ENCODE measurements at regions of chr12 and their contacts with region 1.

Region 1: GRCh38 chr12:12786716-12787601 is 1.5 kb downstream of the APOLD1 start:
- DNase-seq: peak; percentile 73 to 78 (median 76)
- H3K4me3 ChIP-seq: peak overlapping the region; percentile 75 to 81
- H3K4me3 Mint-ChIP-seq: peak overlapping the region; percentile 80 to 92 (median 88)
- H3K27ac ChIP-seq: peak overlapping the region; percentile 65
- H3K27ac Mint-ChIP-seq: peak overlapping the region; percentile 48 to 90 (median 85)
- H3K4me1 ChIP-seq: peaks cover 27% of the 10 kb centered on the region
- H3K4me1 Mint-ChIP-seq: peaks cover 4 to 30% (median 10%) of the 10 kb centered on the region in 4 donors
- H3K27me3 ChIP-seq: no peaks in the 10 kb centered on the region
- H3K27me3 Mint-ChIP-seq: no peaks in the 10 kb centered on the region

Region 2: DNA sequence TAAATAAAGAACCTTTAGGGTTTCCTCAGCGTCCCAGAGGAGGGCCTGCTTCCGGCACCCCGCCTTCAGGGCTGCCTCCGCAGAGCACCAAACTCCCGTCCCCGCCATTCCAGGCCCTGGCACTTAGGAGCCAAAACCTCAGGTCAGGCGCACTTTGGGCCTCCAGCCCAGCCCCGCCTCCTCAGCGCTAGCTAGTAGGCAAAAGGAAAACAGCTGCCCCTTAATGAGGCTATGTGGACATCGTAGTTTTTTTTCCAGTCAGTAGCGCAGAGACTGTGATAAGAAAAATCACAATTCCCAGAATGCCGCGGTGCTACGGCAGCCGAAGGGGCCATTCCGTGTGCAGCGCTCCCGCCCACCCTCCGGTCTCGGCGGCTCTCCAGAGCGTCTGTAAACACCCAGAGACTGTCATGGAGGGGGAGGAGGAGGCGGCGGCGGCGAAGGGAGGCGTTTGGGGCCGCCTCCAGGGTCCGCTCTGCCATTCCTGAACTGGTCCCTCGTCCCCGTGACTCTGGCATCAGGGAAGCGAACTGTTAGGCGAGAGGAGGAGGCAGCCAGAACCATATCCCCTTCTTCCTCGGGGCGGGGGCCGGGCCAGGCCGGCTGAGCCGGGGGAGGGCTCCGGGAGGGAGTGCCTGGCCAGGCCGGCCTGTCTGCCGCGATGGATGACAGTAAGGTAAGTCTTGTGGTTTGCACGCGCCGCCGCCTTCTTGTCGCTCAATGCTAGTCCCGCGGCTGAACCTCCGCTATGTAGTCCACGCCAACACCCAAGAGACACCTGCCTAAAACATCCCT is 175.2 kb before region 1 on chr12 and contains the start of gene CREBL2:
- CTCF ChIA-PET with region 1: no interaction called
- POLR2A ChIA-PET with region 1: no interaction called
- intact Hi-C with region 1: no loop called
- DNase-seq: peak; percentile 88 to 89 (median 88)
- H3K4me3 ChIP-seq: peak within 1 kb of the TSS; percentile 92 to 97
- H3K4me3 Mint-ChIP-seq: peak within 1 kb of the TSS; percentile 92 to 99 (median 95)
- H3K27ac ChIP-seq: peak within 1 kb of the TSS; percentile 77
- H3K27ac Mint-ChIP-seq: peak within 1 kb of the TSS; percentile 93 to 99 (median 99)
- H3K4me1 ChIP-seq: peaks cover 66% of the 10 kb centered on the region
- H3K4me1 Mint-ChIP-seq: peaks cover 34 to 73% (median 54%) of the 10 kb centered on the region in 4 donors
- H3K27me3 ChIP-seq: no peaks in the 10 kb centered on the region
- H3K27me3 Mint-ChIP-seq: no peaks in the 10 kb centered on the region
- total RNA-seq, gene CREBL2: 51.0 to 52.0 TPM

Region 3: GRCh38 chr12:12803186-12803585 is 16.2 kb after region 1 on chr12:
- CTCF ChIA-PET with region 1: interaction called, 108 read pairs
- POLR2A ChIA-PET with region 1: interaction called, 57 read pairs
- intact Hi-C with region 1: loop called (anchors 1 kb)
- DNase-seq: peak; percentile 3 to 74 (median 15)
- H3K4me3 ChIP-seq: no peak overlapping the region
- H3K4me3 Mint-ChIP-seq: peak overlapping the region in 6 of 8 donors; percentile 11 to 72 (median 32)
- H3K27ac ChIP-seq: no peak overlapping the region
- H3K27ac Mint-ChIP-seq: peak overlapping the region; percentile 57 to 97 (median 87)
- H3K4me1 ChIP-seq: peaks cover 42% of the 10 kb centered on the region
- H3K4me1 Mint-ChIP-seq: peaks cover 23 to 59% (median 44%) of the 10 kb centered on the region in 4 donors
- H3K27me3 ChIP-seq: no peaks in the 10 kb centered on the region
- H3K27me3 Mint-ChIP-seq: no peaks in the 10 kb centered on the region

Region 4: DNA sequence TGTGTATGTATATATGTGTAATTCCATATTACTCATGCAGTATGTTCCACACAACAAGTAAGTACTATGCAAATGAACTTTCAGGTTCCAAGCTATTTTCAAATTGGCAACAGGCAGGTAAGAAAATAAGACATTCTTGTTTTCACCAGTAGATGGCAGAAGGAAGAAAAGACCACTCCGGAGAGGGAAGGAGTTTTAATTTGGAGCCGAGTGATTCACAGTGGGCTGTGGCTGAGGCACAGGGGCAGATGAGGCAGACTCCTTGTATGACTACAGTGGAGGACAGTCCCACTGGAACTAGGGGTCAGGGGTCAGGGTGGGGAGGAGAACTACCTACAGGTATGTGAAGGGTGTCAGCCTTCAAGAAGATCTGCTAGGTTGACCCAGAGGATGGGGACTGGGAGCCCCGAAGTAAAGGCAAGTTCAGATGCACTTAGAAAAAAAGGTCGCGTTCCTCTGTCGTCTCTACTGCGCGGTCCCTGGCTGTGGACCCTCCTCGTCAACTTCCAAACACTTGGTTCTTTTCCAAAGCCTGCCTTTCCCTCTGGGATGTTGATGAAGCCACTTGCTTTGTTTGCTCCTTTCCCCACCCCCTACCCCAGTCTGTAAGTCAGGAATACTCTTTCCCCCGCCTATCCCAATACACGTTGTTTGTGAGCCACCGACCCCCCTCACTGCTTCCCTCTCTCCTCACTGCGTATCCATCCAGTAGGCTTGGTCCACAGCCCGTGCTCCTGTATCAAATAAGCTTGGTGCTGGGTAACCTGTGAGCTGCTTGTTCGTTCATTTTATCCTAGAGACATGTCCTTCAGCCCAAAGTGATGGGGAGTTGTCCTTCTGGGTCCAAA is 50.3 kb after region 1 on chr12:
- CTCF ChIA-PET with region 1: interaction called, 10 read pairs
- POLR2A ChIA-PET with region 1: no interaction called
- intact Hi-C with region 1: loop called (anchors 2 kb)
- DNase-seq: peak; percentile 38 to 49 (median 47)
- H3K4me3 ChIP-seq: no peak overlapping the region
- H3K4me3 Mint-ChIP-seq: peak overlapping the region in 5 of 8 donors; percentile 1 to 76 (median 24)
- H3K27ac ChIP-seq: no peak overlapping the region
- H3K27ac Mint-ChIP-seq: peak overlapping the region; percentile 1 to 87 (median 52)
- H3K4me1 ChIP-seq: peaks cover 18% of the 10 kb centered on the region
- H3K4me1 Mint-ChIP-seq: peaks cover 7 to 24% (median 16%) of the 10 kb centered on the region in 4 donors
- H3K27me3 ChIP-seq: no peaks in the 10 kb centered on the region
- H3K27me3 Mint-ChIP-seq: no peaks in the 10 kb centered on the region

Region 5: GRCh38 chr12:12983420-12984035 is 196.6 kb after region 1 on chr12:
- CTCF ChIA-PET with region 1: interaction called, 3 read pairs
- POLR2A ChIA-PET with region 1: interaction called, 4 read pairs
- intact Hi-C with region 1: loop called (anchors 1 kb)
- DNase-seq: no peak
- H3K4me3 ChIP-seq: no peak overlapping the region
- H3K4me3 Mint-ChIP-seq: no peak overlapping the region
- H3K27ac ChIP-seq: no peak overlapping the region
- H3K27ac Mint-ChIP-seq: peak overlapping the region in 1 of 7 donors; percentile 52
- H3K4me1 ChIP-seq: no peaks in the 10 kb centered on the region
- H3K4me1 Mint-ChIP-seq: peaks cover 0 to 2% (median under 1%) of the 10 kb centered on the region in 4 donors
- H3K27me3 ChIP-seq: no peaks in the 10 kb centered on the region
- H3K27me3 Mint-ChIP-seq: no peaks in the 10 kb centered on the region

Region 6: DNA sequence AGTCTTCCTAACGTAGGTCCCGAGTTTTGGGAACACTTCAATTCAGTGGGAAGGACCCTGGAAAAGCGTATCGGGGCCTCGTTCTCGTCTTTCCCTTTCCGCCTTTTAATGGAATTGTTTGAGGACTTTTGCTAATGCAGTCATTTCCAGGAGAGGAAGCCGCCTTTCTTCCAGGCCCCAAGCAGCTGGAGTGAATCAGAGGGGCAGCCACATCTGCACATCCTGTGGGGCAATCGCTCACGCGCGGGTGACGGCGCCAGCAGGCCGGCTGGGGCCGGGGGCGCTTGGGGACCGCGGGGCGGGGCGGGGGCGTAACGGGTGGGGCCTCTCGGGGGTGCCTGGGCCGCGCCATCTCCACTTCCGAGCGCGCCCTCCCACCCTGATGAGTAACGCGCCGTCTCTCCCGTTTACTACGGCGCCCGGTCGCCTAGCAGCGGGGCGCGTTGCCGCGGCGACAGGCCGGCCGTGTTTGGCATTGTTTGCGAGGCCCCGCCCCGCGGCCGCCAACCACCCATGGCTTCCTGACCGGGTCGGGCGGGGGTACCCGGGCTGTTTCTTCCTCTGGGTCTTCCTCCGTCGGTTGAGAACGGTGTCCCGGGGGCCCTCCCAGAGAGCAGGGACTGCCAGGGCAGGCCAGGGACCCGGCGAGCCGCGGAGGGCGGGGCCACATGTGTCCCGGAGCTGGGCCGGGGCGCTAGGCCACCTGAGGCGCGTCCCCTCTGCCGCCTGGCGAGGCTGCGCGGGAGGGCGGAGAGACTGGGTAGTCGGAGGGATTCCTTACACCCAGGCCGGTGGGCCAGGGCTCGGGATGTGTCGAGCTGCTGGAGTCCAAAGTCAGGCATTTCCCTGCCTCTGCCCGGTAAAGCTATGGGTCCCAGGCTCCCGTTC is 314.2 kb after region 1 on chr12:
- CTCF ChIA-PET with region 1: interaction called, 3 read pairs
- POLR2A ChIA-PET with region 1: no interaction called
- intact Hi-C with region 1: loop called (anchors 2 kb)
- DNase-seq: peak; percentile 95 to 97 (median 96)
- H3K4me3 ChIP-seq: peak overlapping the region; percentile 44 to 69
- H3K4me3 Mint-ChIP-seq: peak overlapping the region; percentile 85 to 93 (median 88)
- H3K27ac ChIP-seq: peak overlapping the region; percentile 93
- H3K27ac Mint-ChIP-seq: peak overlapping the region; percentile 93 to 99 (median 99)
- H3K4me1 ChIP-seq: peaks cover 40% of the 10 kb centered on the region
- H3K4me1 Mint-ChIP-seq: peaks cover 38 to 58% (median 45%) of the 10 kb centered on the region in 4 donors
- H3K27me3 ChIP-seq: no peaks in the 10 kb centered on the region
- H3K27me3 Mint-ChIP-seq: no peaks in the 10 kb centered on the region

Measured in CD4-positive, alpha-beta memory T cell (primary cell).